ENCODE measurements at regions of chr5 and their contacts with region 1.

Region 1: GRCh38 chr5:43191740-43192557 is at the start of gene NIM1K:
- DNase-seq: peak; percentile 60
- H3K4me3 Mint-ChIP-seq: peak within 1 kb of the TSS; percentile 72
- H3K27ac Mint-ChIP-seq: no peak within 1 kb of the TSS
- H3K4me1 Mint-ChIP-seq: peaks cover 31% of the 10 kb centered on the region
- H3K27me3 Mint-ChIP-seq: peaks cover 20% of the 10 kb centered on the region
- total RNA-seq, gene NIM1K: 0.54 to 0.57 TPM

Region 2: DNA sequence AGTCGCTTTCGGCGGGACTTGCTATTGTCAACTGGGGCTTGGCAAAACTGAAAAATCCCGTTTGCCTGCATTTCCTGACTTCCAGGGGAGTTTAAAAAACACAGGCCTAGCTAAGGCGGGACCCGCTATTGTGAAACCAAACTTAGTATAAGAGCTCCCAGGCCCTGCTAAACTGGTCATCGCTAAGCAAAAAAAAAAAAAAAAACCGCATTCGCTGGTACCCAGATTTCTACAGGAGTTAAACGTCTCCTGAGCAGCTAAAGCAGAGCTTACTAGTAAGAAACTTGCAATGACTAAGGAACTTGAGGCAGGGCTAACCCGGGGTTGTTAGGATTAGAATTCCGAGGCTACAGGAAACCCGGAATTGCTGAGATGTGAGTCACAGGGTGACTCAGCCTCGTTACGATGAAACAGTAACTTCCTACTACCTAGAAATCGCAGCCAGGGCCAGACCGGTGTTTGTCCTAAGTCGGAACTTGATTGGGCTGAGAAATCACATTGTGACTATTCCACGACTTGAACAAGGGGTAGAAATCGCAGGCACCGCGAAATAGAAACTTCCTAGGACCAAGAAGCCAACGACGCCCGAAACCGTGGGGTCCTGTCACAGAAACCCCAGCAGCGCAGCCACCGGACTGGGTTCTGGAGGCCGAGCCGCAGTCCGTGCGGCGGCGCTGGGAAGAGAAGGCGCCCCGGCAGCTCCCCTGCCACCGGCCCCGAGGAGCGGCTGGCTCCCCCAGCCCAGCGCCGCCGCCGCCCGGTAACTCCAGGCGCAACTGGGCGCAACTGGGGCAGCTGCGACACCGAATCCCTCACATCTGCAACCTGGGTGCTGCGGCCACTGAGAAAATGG is 241.3 kb before region 1 on chr5:
- CTCF ChIA-PET with region 1: no interaction called
- intact Hi-C with region 1: loop called (anchors 1 kb)
- DNase-seq: peak; percentile 83
- H3K4me3 Mint-ChIP-seq: peak overlapping the region; percentile 87
- H3K27ac Mint-ChIP-seq: peak overlapping the region; percentile 88
- H3K4me1 Mint-ChIP-seq: peaks cover 9% of the 10 kb centered on the region
- H3K27me3 Mint-ChIP-seq: no peaks in the 10 kb centered on the region

Region 3: DNA sequence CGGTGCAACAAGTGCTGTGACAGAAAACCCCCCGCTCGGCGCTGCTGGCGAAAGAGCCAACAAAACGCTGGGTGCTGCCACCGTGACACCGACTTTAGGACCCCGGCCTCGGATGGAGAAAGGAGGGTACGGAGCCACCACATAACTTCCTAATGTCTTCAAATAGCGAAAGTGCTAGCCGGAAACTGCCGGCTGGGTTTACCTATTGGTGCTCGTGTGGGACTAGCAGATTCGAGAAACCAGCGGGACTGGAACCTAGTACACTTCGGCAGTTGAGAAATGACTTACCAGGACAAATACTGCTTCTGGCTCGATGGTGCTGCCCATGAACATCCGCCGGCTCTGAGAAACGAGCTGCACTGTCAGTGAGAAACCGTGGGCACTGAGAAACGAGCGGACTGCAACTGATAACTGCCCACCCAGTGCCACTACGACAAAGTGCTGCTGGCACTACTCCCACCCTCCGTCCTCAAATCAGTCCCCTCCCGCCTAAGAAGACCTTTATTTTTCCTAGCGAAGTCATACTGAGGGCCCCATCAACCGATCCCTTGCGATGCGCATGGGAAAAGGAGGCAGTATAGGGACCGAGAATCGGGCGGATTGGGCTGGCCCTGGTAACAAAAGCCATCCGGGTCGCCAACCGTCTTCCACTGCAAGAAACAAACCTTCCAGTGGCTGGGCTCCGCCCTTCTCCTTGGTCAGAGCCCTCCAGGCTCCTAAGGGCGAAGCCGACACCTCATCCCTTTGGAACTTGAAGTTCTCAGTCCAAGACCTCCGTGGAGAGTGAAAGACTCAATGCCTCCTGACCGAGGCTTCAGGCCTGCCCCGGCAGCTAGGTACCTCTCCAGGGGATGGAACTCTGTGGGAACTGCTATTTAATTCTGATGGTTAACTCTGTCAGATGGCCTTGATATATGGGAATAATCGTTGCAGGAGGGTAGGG is 124.9 kb before region 1 on chr5:
- CTCF ChIA-PET with region 1: no interaction called
- intact Hi-C with region 1: loop called (anchors 1 kb)
- DNase-seq: peak; percentile 92
- H3K4me3 Mint-ChIP-seq: peak overlapping the region; percentile 98
- H3K27ac Mint-ChIP-seq: peak overlapping the region; percentile 98
- H3K4me1 Mint-ChIP-seq: peaks cover 36% of the 10 kb centered on the region
- H3K27me3 Mint-ChIP-seq: no peaks in the 10 kb centered on the region

Region 4: GRCh38 chr5:43140286-43140685 is 51.7 kb before region 1 on chr5:
- CTCF ChIA-PET with region 1: no interaction called
- intact Hi-C with region 1: loop called (anchors 1 kb)
- DNase-seq: no peak
- H3K4me3 Mint-ChIP-seq: no peak overlapping the region
- H3K27ac Mint-ChIP-seq: peak overlapping the region; percentile 30
- H3K4me1 Mint-ChIP-seq: peaks cover 45% of the 10 kb centered on the region
- H3K27me3 Mint-ChIP-seq: no peaks in the 10 kb centered on the region

Region 5: DNA sequence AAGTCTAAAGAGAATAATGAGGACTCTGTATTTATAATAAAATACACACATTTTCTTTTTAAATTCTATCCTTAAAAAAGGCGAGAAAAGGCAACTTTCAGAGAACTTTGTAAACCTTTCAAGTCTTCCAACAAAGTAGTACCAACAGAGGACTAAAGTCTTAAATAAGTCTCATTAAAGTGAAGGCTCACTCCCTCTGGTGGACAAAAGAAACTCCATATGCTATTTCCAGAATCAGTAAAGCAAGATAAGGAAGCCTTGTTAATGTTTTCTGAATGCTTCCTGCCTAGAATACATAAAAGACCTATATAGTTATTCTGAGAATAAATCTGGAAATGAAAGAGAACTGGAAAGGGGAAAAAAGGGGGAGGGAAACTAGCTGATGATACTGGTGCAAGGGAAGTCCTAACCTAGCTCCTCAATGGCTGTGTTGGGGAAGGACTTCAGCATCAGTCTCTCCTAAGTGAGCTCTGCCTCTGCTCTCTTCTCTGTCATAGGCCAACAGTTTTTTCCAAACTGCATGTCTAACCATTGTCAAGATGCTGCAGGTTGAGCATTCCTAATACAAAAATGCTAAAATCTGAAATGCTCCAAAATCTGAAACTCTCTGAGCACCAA is 114.1 kb after region 1 on chr5:
- CTCF ChIA-PET with region 1: no interaction called
- intact Hi-C with region 1: loop called (anchors 1 kb)
- DNase-seq: no peak
- H3K4me3 Mint-ChIP-seq: no peak overlapping the region
- H3K27ac Mint-ChIP-seq: peak overlapping the region; percentile 75
- H3K4me1 Mint-ChIP-seq: peaks cover 80% of the 10 kb centered on the region
- H3K27me3 Mint-ChIP-seq: no peaks in the 10 kb centered on the region

Region 6: GRCh38 chr5:43556857-43557542 is 365.1 kb after region 1 on chr5 and contains the start of gene PAIP1:
- CTCF ChIA-PET with region 1: no interaction called
- intact Hi-C with region 1: loop called (anchors 2 kb)
- DNase-seq: peak; percentile 82
- H3K4me3 Mint-ChIP-seq: peak within 1 kb of the TSS; percentile 84
- H3K27ac Mint-ChIP-seq: peak within 1 kb of the TSS; percentile 95
- H3K4me1 Mint-ChIP-seq: peaks cover 17% of the 10 kb centered on the region
- H3K27me3 Mint-ChIP-seq: peaks cover 3% of the 10 kb centered on the region
- total RNA-seq, gene PAIP1: 41.7 to 42.9 TPM